AG04449 (cell line): ENCODE measurements at regions of chr4 and their contacts with region 1.

Region 1: DNA sequence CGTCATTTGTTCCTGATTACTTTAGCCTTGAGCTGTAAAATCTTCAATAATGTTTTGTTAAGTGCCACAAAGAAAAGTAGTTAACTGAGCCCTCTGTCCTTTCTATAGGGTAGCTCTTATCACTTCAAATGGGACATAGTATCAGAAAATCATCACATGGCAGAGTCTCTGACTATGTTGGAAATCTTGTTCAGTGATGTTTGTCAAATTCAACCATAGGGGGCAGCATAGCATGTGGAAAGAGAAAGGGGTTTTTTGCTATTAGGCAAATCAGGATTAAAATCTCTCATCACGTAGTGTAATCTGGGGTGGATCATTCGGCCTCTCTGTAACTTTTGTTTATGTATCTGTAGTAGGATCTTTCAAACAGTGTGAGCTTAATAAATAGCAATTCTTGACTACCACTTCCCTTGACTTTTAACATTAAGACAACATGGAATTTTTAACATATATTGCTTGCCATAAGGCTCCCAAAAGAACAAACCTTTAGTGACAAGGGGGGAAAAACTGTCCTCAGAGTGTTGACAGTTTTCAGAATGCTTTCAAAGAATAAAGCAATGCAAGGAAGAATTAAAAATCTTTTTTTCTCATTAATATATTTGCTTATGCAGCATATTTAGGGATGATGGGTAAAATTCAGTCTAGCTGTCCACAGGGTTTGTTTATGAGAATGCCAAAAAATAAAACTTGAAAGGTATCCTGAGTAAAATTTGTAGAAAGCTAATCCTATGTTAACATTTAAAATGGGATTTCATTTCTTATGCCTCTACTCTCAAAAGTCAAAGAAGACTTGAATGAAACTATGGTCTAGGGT is 127.2 kb downstream of the FBXW7 start:
- DNase-seq: no peak
- H3K4me3 ChIP-seq: no peak overlapping the region
- CTCF ChIP-seq: peak; percentile 46

Region 2: DNA sequence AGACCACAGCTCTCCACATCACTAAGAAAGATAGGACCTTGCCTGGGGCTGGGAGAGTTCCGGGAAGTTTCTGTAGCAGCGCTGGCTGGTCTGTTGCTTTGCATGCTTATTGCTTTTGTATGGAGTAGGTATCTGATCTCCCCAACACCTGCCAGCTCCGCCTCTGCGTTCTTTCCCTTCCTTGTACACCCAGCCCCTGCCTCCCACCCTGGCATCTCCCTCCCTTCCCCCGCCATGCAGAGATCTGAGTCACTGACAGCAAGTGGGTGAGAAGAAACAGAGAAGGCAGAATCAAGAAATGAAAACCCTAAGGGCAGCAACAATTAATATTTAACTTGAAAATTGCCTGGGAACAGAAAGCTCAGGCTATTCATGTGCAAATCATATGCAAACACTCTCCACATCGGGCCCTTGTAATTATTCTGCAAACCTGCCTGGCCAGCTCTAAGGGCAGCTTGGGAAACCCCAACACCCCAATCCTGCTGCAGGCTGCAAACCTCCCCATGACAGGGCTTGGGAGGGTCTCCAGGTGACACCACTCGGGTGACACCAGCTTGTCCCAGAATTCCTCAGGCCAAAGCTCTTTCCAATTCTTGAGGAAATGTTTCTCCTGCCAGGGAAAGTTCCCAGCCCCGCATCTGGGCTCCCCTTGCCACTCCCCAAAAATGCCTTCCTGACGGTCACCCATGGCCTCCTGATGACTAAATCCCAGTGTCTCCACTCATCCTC is 130.1 kb before region 1 on chr4:
- CTCF ChIA-PET with region 1: no interaction called
- POLR2A ChIA-PET with region 1: no interaction called
- DNase-seq: no peak
- H3K4me3 ChIP-seq: no peak overlapping the region
- CTCF ChIP-seq: no peak

Region 3: GRCh38 chr4:152398060-152398459 is 10.7 kb before region 1 on chr4:
- CTCF ChIA-PET with region 1: interaction called, 12 read pairs
- POLR2A ChIA-PET with region 1: no interaction called
- DNase-seq: no peak
- H3K4me3 ChIP-seq: no peak overlapping the region
- CTCF ChIP-seq: peak; percentile 15

Region 4: GRCh38 chr4:152424977-152425376 is 16.3 kb after region 1 on chr4:
- CTCF ChIA-PET with region 1: interaction called, 24 read pairs
- POLR2A ChIA-PET with region 1: no interaction called
- DNase-seq: no peak
- H3K4me3 ChIP-seq: no peak overlapping the region
- CTCF ChIP-seq: no peak